ENCODE measurements at regions of chrX and their contacts with region 1.

Region 1: DNA sequence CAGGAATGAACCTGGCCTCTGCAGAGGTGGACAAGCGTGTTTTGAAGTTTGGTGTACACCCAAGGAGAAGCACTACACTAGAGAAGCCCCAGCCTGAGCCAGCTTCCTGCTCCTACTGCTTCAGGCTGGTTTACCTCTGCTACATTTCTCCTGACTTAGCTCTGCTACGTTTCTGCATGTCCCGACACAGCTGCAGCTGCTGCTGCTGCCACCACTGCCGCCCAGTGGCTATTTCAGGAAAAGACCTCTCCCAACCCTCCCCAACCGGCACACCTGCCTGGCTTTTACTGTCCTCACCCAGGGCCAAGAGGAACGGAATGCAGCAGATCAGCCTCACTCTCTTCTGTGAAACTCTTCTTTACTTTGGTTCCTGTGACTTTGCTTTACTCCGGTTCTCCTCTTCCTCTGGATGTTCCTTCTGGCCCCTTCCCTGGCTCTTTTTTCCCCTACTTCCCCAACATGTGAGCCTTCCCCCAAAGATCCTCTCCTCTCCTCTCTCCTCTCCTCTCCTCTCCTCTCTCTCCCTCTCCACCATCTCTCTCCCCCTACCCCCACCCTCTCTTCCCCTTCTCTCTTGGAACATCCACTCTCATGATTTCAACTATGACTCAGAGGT is 3.1 kb upstream of the P2RY4 start:
- DNase-seq: no peak
- ATAC-seq: peak; percentile 95
- H3K4me3 ChIP-seq: no peak overlapping the region
- H3K27ac ChIP-seq: no peak overlapping the region
- H3K4me1 ChIP-seq: no peaks in the 10 kb centered on the region
- H3K27me3 ChIP-seq: no peaks in the 10 kb centered on the region
- CTCF ChIP-seq: peak; percentile 46 to 73 (median 65)
- EP300 ChIP-seq: no peak
- POLR2A ChIP-seq: no peak
- RAD21 ChIP-seq: peak; percentile 49

Region 2: DNA sequence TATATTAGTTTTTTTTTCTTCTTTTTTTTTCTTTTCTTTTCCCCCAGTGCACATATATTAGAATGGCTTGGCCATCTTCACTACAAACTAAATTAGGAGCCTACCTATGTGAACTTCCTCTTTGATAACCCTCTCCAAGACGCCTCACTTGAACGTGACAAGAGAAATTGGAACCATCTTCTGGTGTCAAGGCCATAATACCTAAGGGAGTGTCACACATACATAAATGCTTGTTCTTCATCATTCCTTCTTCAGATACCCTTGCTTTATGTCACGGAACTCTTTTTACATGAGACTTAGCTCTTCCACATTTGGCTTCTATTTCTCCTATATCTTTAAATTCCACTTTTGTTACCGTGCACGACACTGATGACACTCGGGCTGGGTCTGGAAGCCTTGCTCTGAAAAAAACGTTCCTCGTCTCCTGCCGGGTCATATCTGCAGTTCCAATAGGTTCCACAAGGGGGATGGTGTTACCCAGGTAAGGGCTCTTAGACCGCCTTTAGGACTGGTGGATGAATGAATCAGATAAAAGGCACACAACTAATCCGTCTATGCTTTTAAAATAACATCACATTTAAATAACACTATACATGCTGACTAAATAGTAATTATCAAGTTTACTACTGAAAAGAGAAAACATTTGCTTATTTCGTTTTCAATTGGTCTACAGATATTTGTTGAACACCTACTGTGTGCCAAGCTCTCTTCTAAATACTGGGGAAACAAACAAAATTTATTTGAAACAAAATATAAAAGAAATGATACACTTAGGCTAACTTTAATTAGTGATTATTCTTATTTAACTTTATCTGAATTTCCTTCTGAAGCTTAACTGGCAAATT is 65.9 kb before region 1 on chrX:
- CTCF ChIA-PET with region 1: interaction called, 3 read pairs
- POLR2A ChIA-PET with region 1: no interaction called
- RAD21 ChIA-PET with region 1: no interaction called
- SMC1A ChIA-PET with region 1: no interaction called
- in situ Hi-C with region 1: no loop called
- intact Hi-C with region 1: loop called (anchors 2 kb)
- DNase-seq: no peak
- ATAC-seq: peak; percentile 94
- H3K4me3 ChIP-seq: no peak overlapping the region
- H3K27ac ChIP-seq: no peak overlapping the region
- H3K4me1 ChIP-seq: no peaks in the 10 kb centered on the region
- H3K27me3 ChIP-seq: no peaks in the 10 kb centered on the region
- CTCF ChIP-seq: peak; percentile 64 to 74 (median 65)
- EP300 ChIP-seq: no peak
- POLR2A ChIP-seq: no peak
- RAD21 ChIP-seq: peak; percentile 60

Region 3: DNA sequence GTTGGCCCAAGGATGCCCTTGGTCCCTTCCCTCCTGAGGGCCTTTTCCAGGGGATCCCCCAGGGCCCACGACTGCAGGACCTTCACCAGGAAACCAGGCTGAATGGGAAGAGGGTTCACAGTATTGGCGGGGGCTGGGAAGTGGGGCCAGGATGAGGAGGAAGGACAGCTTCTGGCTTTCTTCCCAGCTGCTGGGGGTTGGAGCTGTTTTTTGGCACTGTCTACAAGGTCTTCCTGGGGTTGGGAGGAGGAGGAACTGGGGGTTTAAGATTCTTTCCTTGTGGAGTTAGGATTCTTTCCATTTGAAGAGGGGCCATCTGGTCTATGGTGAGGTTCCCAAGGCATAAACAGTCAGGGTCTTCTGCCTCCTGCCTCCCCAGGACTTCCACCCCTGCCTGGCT is 91.7 kb after region 1 on chrX:
- CTCF ChIA-PET with region 1: no interaction called
- POLR2A ChIA-PET with region 1: no interaction called
- RAD21 ChIA-PET with region 1: no interaction called
- SMC1A ChIA-PET with region 1: no interaction called
- in situ Hi-C with region 1: no loop called
- intact Hi-C with region 1: no loop called
- DNase-seq: no peak
- ATAC-seq: no peak
- H3K4me3 ChIP-seq: no peak overlapping the region
- H3K27ac ChIP-seq: no peak overlapping the region
- H3K4me1 ChIP-seq: no peaks in the 10 kb centered on the region
- H3K27me3 ChIP-seq: no peaks in the 10 kb centered on the region
- CTCF ChIP-seq: no peak
- EP300 ChIP-seq: no peak
- POLR2A ChIP-seq: no peak
- RAD21 ChIP-seq: no peak